Aorta (tissue), 5 donors: ENCODE measurements at regions of chr10 and their contacts with region 1.

Region 1: DNA sequence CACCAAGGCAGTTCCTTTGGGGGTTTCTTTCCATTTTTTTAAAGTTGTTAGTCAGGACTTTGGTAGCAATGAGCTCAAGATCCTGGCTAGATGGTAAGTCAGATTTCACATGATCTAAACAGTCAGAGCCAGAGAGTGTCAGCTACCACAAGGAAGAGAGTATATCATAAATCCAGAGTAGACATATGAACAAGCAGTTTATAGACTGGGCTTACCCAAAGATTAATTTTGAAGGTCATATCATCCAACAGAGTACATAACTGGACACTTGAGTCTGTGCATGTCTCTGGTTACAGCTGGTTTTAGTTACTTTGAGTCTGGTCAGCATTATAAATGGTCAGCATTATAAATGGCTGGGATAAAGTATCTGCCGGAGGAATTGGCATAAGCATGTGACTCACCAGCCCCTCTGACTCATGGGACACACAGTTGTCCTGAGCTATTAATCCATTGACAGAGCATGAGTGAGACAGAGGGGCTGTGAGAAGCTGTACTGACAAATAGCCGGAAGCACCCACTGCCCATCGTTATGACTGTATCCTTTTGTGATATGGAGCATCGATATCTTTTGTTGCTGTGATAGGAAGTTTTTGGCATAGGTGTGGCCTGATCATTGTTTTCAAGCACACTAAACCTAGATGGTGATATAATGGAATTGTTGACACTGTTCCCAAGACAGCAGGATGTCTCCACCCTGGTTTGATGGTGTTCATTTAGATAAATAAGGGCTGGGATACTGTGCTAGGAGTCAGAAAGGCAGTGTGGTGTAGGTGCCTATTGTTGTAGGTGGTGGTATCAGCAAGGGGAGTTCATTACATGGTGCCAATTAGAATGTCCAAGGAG is 19.2 kb downstream of the PPP1R3C start:
- DNase-seq: peak in 1 of 2 donors; percentile 79
- ATAC-seq: peak; percentile 43
- H3K4me3 ChIP-seq: no peak overlapping the region
- H3K27ac ChIP-seq: peak overlapping the region; percentile 57 to 61
- H3K4me1 ChIP-seq: peaks cover 0 to 3% of the 10 kb centered on the region in 2 donors
- H3K27me3 ChIP-seq: no peaks in the 10 kb centered on the region

Region 2: DNA sequence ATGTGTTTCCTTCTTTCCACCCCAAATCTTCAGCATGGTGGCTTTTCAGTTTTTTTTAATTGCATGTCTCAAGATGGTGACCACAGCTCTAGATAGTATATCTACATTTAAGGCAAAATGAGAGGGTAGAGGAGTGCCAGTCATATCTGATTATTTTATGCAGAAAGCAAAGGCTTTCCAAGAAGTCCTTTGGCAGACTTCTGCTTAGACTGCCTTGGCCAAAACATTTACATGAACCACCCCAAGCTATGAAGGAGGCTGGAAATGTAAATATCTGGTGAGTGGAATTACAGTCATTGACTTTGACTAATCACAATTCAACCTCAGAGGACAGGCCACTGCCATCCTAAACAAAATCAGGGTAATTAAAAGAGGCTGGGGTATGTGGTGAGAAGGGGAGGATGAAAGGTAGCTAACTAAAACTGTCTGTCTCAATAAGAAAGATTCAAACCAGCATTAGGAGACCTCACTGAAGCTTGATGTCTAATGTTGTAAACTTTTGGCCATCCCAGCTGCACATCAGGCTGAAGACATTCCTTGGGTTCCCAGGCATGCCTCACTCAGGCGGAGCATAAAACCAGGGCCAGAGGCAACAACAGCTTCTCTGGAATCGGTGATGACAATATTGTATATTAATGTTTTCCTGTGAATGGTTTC is 34.2 kb before region 1 on chr10:
- intact Hi-C with region 1: loop called in 1 of 2 experiments (anchors 5 kb)
- DNase-seq: no peak
- ATAC-seq: no peak
- H3K4me3 ChIP-seq: no peak overlapping the region
- H3K27ac ChIP-seq: peak overlapping the region; percentile 71 to 91
- H3K4me1 ChIP-seq: peaks cover 9 to 14% of the 10 kb centered on the region in 2 donors
- H3K27me3 ChIP-seq: no peaks in the 10 kb centered on the region